Aorta (tissue), 5 donors: ENCODE measurements at regions of chr3 and their contacts with region 1.

Region 1: DNA sequence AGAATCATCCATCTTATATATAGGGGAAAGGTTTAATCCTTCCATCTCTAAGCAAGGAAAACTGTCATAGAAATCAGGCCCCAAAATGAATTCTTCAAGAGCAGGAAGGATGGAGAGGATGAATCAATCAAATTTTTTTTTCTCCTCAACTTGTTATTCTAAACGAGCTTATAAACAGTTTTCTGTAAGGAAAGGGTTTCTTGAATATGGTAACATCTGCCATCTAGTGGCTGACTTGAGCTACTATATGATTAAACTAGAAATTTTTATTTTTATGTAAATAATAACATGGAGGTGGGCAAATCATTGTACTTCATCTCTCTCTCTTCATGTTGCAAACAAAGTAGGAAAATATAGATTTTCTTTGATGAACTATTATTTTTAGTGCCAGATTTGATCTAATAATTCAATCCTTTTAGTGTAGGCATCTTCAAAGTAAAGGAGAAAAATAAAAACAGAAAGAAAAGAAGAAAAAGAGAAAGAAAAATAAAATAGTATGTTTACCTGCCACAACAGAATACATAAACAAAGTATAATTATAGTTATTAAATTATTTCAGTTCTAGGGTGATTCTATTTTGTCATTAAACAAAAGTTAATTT is 146.6 kb downstream of the SERPINI1 start:
- DNase-seq: no peak
- ATAC-seq: no peak
- H3K4me3 ChIP-seq: peak overlapping the region in 1 of 2 donors; percentile 41
- H3K27ac ChIP-seq: no peak overlapping the region
- H3K4me1 ChIP-seq: no peaks in the 10 kb centered on the region
- H3K27me3 ChIP-seq: no peaks in the 10 kb centered on the region

Region 2: DNA sequence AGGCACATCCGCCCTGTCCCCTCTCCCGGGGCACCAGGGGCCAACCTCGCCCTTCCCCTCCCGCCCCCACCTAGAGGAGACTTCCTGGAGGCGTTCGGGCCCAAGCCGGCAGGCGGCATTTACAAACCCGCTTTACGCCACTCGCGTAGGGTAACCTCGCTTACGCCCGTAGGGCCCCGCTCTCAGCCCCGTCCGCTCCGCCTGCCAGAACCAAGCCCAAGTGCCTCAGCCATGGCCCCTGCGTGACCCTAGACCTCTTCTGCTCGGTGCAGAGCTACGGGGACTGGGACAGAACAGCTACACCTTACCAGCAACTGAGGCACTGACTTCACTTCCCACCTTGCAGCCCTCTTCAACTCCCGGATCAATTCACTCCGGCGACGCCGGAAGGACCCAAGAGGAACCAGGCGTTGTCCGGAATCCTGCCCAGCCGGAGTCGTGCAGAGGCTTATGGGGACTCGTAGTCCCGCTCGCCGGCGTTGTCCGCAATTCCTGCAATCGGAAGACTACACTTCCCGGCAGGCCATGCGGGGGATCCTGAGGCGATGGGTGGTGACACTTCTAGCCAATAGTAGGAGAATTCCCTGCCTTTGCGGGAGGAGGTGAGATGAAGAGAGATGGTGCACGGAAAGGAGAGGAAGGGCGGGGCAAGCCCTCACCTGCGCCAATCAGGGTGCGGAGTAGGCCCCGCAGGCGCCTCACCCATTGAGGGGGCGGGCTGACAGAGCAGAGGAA is 147.5 kb before region 1 on chr3 and contains the start of gene PDCD10:
- intact Hi-C with region 1: loop called in 1 of 2 experiments (anchors 5 kb)
- DNase-seq: peak; percentile 99
- ATAC-seq: peak; percentile 99
- H3K4me3 ChIP-seq: peak within 1 kb of the TSS; percentile 81
- H3K27ac ChIP-seq: peak within 1 kb of the TSS; percentile 29 to 91
- H3K4me1 ChIP-seq: no peaks in the 10 kb centered on the region
- H3K27me3 ChIP-seq: no peaks in the 10 kb centered on the region
- total RNA-seq, gene PDCD10: 45.2 to 54.5 TPM

Region 3: GRCh38 chr3:167740961-167741587 is 141.1 kb before region 1 on chr3:
- intact Hi-C with region 1: loop called (anchors 5 kb)
- DNase-seq: no peak
- ATAC-seq: no peak
- H3K4me3 ChIP-seq: no peak overlapping the region
- H3K27ac ChIP-seq: no peak overlapping the region
- H3K4me1 ChIP-seq: no peaks in the 10 kb centered on the region
- H3K27me3 ChIP-seq: no peaks in the 10 kb centered on the region

Region 4: DNA sequence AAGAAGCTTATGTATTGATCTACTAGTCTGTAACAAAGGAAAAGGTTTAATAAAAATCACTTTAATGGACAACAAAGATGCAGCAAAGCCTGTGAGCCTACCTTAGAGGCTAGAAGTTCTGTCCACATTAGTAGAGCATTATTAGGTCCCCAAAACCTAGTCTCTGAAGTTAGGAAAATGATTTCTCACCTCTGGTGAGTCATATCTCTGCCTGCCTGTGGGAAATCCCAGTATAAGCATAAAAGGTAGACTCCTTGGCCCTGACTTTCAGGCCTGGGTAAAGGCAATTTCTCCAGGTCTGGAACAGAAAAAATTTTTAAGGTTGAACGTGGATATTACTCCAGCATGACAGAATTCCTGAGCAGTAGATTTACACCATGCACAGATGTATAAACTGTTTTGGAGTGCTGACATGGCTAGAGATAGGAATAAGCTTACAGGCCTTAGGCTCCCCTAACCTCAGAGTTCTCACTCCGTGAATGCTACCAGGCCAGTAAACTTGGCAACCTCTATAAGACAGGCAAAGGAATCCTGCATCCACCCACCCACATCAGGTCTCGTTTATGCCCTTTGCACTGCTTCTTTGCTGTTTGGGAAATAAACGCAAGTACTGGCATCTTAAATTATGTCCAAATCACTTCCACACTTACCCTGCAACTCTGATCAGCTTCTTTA is 42.6 kb before region 1 on chr3:
- intact Hi-C with region 1: loop called (anchors 2 kb)
- DNase-seq: no peak
- ATAC-seq: no peak
- H3K4me3 ChIP-seq: no peak overlapping the region
- H3K27ac ChIP-seq: no peak overlapping the region
- H3K4me1 ChIP-seq: no peaks in the 10 kb centered on the region
- H3K27me3 ChIP-seq: no peaks in the 10 kb centered on the region

Region 5: GRCh38 chr3:167929968-167930367 is 47.8 kb after region 1 on chr3:
- intact Hi-C with region 1: no loop called
- DNase-seq: no peak
- ATAC-seq: no peak
- H3K4me3 ChIP-seq: no peak overlapping the region
- H3K27ac ChIP-seq: no peak overlapping the region
- H3K4me1 ChIP-seq: no peaks in the 10 kb centered on the region
- H3K27me3 ChIP-seq: no peaks in the 10 kb centered on the region